ENCODE measurements at regions of chr3 and their contacts with region 1.

Region 1: DNA sequence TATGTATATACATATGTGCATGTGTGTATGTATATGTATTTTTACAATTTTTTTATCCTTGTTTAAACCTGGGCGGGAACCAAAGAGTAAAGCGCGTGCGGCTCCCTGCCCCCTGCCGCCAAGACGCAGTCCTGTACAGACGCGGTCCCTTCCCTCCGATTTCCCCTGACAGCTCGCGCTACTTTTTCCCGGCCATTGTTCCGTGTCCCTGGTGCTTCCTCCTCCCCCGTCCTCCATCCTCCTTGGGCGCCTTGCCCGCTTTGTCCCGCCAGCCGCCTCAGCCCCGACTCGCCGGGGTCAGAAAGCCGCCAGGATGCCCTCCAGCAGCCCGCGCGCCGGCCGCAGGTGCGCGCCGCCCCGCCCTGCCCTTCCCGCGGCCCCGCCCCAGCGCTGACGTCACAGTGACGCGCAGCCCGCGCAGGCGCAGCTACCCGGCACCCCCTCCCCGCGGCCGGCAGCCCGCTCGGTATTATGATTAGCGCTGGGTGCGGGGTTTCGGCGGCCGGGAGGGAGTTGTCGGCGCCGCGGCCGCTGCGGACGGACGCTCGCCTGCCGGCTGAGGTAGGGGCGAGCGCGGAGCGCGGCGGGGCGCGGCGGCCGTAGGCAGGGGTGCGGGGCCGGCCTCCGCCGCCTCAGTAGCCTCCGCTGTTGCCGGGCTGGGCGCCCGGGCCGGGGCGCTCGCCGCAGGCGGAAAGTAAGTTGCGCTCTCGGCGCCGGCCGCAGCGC is at the start of gene SNRK:
- DNase-seq: peak; percentile 93 to 97
- ATAC-seq: peak; percentile 81 to 95 (median 88)
- H3K4me3 ChIP-seq: peak within 1 kb of the TSS; percentile 71
- H3K4me3 Mint-ChIP-seq: peak within 1 kb of the TSS; percentile 91
- H3K27ac ChIP-seq: peak within 1 kb of the TSS; percentile 92
- H3K27ac Mint-ChIP-seq: peak within 1 kb of the TSS; percentile 94 to 97
- H3K4me1 ChIP-seq: peaks cover 28% of the 10 kb centered on the region
- H3K4me1 Mint-ChIP-seq: peaks cover 39 to 48% of the 10 kb centered on the region in 2 donors
- H3K27me3 ChIP-seq: no peaks in the 10 kb centered on the region
- H3K27me3 Mint-ChIP-seq: no peaks in the 10 kb centered on the region
- CTCF ChIP-seq: peak; percentile 17
- total RNA-seq, gene SNRK: 177 to 209 (median 186) TPM

Region 2: GRCh38 chr3:43013743-43014155 is 272.5 kb before region 1 on chr3:
- intact Hi-C with region 1: loop called (anchors 5 kb)
- DNase-seq: peak; percentile 52 to 66
- ATAC-seq: peak in 2 of 3 donors; percentile 6 to 12
- H3K4me3 ChIP-seq: no peak overlapping the region
- H3K4me3 Mint-ChIP-seq: no peak overlapping the region
- H3K27ac ChIP-seq: peak overlapping the region; percentile 97
- H3K27ac Mint-ChIP-seq: no peak overlapping the region
- H3K4me1 ChIP-seq: peaks cover 37% of the 10 kb centered on the region
- H3K4me1 Mint-ChIP-seq: no peaks in the 10 kb centered on the region
- H3K27me3 ChIP-seq: no peaks in the 10 kb centered on the region
- H3K27me3 Mint-ChIP-seq: no peaks in the 10 kb centered on the region
- CTCF ChIP-seq: no peak

Region 3: GRCh38 chr3:43260412-43260811 is 25.9 kb before region 1 on chr3:
- intact Hi-C with region 1: no loop called
- DNase-seq: no peak
- ATAC-seq: no peak
- H3K4me3 ChIP-seq: no peak overlapping the region
- H3K4me3 Mint-ChIP-seq: no peak overlapping the region
- H3K27ac ChIP-seq: no peak overlapping the region
- H3K27ac Mint-ChIP-seq: no peak overlapping the region
- H3K4me1 ChIP-seq: peaks cover 18% of the 10 kb centered on the region
- H3K4me1 Mint-ChIP-seq: peaks cover 29 to 37% of the 10 kb centered on the region in 2 donors
- H3K27me3 ChIP-seq: no peaks in the 10 kb centered on the region
- H3K27me3 Mint-ChIP-seq: no peaks in the 10 kb centered on the region
- CTCF ChIP-seq: no peak

Region 4: DNA sequence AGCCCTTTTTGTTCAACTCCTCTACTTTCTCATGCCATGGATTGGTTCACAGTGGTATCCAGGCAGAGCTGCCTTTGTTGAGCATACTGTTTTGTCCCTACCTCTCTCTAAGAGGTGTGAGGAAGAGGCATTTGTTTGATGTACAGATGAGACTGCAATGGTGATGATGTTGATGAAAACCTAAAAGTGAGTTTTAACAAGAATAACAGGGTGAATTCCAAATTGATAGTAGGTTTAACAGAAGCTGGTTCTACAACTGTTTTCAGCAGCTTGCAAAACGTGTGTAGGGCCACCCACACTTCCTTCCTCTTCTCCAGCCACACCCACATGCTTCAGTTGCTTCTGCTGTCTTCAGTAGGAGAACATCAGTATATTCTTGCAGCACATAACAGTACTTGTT is 10.3 kb after region 1 on chr3:
- intact Hi-C with region 1: loop called (anchors 1 kb)
- DNase-seq: peak; percentile 43 to 89
- ATAC-seq: peak; percentile 87 to 96 (median 91)
- H3K4me3 ChIP-seq: peak overlapping the region; percentile 14
- H3K4me3 Mint-ChIP-seq: peak overlapping the region; percentile 87
- H3K27ac ChIP-seq: peak overlapping the region; percentile 71
- H3K27ac Mint-ChIP-seq: peak overlapping the region; percentile 82 to 97
- H3K4me1 ChIP-seq: peaks cover 46% of the 10 kb centered on the region
- H3K4me1 Mint-ChIP-seq: peaks cover 71 to 81% of the 10 kb centered on the region in 2 donors
- H3K27me3 ChIP-seq: no peaks in the 10 kb centered on the region
- H3K27me3 Mint-ChIP-seq: no peaks in the 10 kb centered on the region
- CTCF ChIP-seq: no peak

Region 5: DNA sequence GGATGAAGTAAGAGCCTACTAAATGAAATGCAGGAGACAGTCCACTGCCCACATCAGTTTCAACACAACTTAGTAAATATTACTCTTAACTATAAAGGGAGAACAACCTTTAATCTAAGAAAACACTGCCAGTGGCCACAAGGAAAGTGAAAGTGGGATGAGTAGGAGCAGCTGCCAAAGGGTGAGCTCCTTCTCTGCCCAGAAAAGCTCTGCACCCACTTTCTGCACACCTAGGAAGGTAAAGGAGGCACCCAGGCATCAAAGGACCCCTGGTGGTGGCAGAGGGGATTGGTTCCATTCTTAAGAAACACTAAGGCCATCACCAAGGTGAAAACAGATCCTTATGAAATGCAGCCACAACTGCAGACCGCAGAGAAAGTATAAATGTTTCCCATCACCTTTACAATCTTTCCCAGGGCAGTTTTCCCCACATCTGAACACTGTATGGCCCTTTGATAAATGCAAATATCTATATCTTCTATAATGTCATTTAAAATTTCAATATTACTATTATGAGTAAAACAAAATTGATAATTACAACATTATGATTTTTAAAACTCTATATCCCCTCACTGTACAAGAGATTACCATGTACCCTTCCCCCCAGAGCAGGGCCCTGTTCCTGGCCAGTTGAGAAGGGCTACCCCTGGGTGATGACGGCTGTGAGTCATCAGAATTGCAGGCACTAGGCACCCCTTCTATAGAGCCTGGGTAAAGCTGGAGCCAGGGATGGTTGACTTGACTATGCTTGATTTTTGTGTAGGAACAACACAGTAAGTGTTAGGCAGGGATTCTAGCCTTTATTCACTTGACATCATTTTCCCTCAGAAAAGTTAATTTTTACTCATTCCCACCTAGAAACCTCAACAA is 92.0 kb after region 1 on chr3:
- intact Hi-C with region 1: loop called (anchors 5 kb)
- DNase-seq: peak; percentile 52 to 88
- ATAC-seq: peak; percentile 79 to 91 (median 90)
- H3K4me3 ChIP-seq: no peak overlapping the region
- H3K4me3 Mint-ChIP-seq: no peak overlapping the region
- H3K27ac ChIP-seq: no peak overlapping the region
- H3K27ac Mint-ChIP-seq: peak overlapping the region; percentile 15 to 66
- H3K4me1 ChIP-seq: peaks cover 13% of the 10 kb centered on the region
- H3K4me1 Mint-ChIP-seq: peaks cover 18 to 23% of the 10 kb centered on the region in 2 donors
- H3K27me3 ChIP-seq: no peaks in the 10 kb centered on the region
- H3K27me3 Mint-ChIP-seq: no peaks in the 10 kb centered on the region
- CTCF ChIP-seq: peak; percentile 86

Region 6: DNA sequence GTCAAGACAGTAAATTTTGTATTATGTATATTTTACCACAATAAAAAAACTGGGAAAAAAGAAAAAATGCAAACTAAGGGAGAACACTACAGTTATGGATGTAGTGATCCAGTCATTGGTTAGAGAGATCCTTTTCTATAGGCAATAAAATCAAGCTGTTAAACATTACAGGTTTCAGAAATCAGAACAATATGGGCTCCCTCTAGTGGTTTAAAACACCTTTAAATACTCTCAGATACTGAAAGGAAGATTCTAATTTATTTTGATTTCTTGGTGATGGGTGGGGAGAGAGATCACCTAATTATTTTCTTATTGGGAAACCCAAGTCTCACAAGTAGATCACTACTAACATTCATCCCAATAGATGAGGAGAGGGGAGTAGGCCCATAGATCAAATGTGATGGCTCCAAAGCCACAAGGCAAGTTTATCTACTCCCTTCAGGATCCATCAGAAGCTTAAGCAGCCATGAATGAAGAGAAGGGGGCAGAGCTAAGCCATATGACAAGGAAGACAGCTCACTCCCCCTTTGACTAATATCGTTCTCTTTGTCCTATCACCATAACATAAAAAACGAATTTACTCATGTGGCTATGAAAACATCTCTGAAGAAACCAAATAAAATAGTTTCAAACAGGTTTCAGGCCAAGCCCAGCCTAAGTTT is 216.9 kb after region 1 on chr3:
- intact Hi-C with region 1: loop called (anchors 5 kb)
- DNase-seq: peak in 1 of 2 donors; percentile 70
- ATAC-seq: peak; percentile 60 to 81 (median 77)
- H3K4me3 ChIP-seq: no peak overlapping the region
- H3K4me3 Mint-ChIP-seq: peak overlapping the region; percentile 10
- H3K27ac ChIP-seq: no peak overlapping the region
- H3K27ac Mint-ChIP-seq: peak overlapping the region; percentile 62 to 67
- H3K4me1 ChIP-seq: peaks cover 13% of the 10 kb centered on the region
- H3K4me1 Mint-ChIP-seq: peaks cover 47 to 48% of the 10 kb centered on the region in 2 donors
- H3K27me3 ChIP-seq: no peaks in the 10 kb centered on the region
- H3K27me3 Mint-ChIP-seq: no peaks in the 10 kb centered on the region
- CTCF ChIP-seq: peak; percentile 85